SK-N-SH (cell line): ENCODE measurements at regions of chr1 and their contacts with region 1.

Region 1: DNA sequence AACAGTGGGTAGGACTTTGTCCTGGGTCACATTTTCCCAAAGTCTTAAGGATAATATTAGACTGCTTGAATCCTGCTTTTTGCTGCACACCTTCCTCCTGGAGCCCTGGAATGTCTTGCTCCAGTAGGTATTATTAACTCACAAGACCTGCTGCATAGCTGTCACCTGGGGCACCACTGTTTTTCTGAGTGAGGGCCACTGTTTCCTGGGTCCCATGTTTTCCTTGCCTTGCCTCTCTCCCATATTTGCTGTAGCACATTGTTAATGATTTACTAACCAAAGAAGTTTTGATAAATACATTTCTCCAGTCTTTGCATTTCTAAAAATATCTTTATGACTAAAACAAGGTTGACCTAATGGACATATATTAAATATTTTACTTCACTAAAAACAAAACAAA is 22.5 kb upstream of the FCAMR start:
- DNase-seq: no peak
- H3K4me3 ChIP-seq: no peak overlapping the region
- H3K27ac ChIP-seq: no peak overlapping the region
- H3K4me1 ChIP-seq: no peaks in the 10 kb centered on the region
- H3K27me3 ChIP-seq: peaks cover 46% of the 10 kb centered on the region; the same call in 1 of the 2 replicates
- CTCF ChIP-seq: no peak
- EP300 ChIP-seq: no peak
- RAD21 ChIP-seq: no peak

Region 2: DNA sequence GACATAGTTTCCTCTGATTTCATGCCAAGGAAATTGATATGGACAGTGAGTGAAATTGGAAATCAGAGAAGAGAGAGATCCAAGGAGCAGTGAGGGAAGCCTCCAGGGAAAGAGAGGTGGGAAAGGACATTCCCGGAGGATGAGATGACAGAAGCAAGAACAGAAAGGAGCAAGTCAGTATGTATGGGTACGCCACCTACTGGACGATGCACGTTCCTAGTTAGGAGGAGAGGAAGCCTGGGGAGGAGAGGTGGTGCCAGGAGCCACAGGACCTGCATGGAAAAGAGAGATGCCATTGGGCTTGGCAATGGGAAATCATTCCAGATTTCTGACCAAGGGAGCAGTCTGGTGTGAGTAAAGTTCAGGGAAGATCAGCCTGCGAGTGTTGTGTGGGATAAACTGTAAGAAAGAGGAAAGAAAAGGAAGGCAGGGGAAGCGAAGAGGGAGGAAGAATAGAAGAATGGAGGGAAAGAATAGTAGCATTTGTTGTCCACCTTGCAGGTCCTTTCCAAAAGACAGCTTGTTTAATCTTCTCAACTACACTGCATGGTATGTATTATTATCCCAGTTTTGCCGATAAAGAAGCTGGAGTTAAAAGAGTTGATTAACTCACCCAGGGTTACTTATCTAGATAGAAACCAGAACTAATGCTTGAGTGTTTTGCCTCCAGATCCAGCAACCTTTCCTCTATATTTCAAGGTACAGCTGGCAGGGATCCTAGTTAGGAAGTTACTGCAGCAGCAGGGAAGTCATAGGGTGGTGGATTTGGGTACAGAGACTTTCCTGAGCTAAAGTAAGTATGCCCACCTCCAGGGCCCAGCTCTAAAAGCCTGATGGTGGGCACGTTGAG is 12.4 kb after region 1 on chr1:
- CTCF ChIA-PET with region 1: interaction called, 13 read pairs
- POLR2A ChIA-PET with region 1: no interaction called
- DNase-seq: peak; percentile 51
- H3K4me3 ChIP-seq: no peak overlapping the region
- H3K27ac ChIP-seq: no peak overlapping the region
- H3K4me1 ChIP-seq: peaks cover 6 to 10% of the 10 kb centered on the region in 2 experiments; a peak in 2 of 4 replicates
- H3K27me3 ChIP-seq: no peaks in the 10 kb centered on the region
- CTCF ChIP-seq: peak; percentile 74
- EP300 ChIP-seq: no peak
- RAD21 ChIP-seq: 0 out of 2 replicates have a peak, but pooled peaks have one; percentile 31